ENCODE measurements at regions of chr15 and their contacts with region 1.

Region 1: DNA sequence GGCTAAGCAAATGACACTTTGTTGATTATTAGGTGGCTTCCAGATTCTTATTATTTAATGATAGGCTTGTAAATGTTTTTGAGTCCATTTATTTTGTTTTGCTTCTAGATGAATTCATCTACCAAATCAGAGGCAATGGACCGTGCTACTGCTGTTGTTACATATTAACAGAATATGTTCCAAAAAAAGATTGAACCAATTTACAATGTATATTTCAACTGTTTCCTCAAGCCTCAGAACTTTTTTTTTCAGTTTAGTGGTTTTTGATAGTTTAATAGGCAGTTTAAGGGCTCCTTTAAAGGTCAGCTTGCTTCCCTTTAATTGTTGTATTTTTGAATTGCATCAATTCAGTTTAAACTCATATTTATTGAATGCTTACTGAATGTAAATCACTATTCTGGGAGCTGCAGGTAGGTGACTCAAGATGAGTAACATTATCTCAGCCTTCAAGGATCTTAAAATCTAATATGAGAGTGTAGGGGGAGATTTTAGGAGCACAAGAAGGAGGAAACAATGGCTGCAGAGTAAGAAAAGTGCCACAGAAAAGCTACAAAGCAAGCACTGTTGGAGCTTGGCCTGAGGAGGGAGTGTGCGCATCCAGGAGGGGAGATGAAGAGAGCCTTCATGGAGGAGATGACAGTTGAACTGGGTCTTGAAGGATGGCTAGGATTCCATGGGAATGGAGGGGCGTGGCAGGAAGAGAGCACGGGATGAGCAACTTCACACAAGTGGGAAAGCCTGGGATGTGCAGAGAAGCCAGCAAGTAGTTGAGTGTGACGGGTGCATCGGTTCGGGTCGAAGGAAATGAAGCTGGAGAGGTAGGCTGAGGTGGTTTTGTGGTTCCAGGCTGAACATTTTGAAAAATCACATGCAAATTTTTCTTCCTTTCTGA is 14.7 kb downstream of the MAP2K1 start:
- DNase-seq: no peak
- ATAC-seq: no peak
- H3K4me3 ChIP-seq: no peak overlapping the region
- H3K27ac ChIP-seq: no peak overlapping the region
- H3K4me1 ChIP-seq: peaks cover 13% of the 10 kb centered on the region
- H3K27me3 ChIP-seq: no peaks in the 10 kb centered on the region
- CTCF ChIP-seq: no peak
- POLR2A ChIP-seq: no peak
- RAD21 ChIP-seq: no peak

Region 2: DNA sequence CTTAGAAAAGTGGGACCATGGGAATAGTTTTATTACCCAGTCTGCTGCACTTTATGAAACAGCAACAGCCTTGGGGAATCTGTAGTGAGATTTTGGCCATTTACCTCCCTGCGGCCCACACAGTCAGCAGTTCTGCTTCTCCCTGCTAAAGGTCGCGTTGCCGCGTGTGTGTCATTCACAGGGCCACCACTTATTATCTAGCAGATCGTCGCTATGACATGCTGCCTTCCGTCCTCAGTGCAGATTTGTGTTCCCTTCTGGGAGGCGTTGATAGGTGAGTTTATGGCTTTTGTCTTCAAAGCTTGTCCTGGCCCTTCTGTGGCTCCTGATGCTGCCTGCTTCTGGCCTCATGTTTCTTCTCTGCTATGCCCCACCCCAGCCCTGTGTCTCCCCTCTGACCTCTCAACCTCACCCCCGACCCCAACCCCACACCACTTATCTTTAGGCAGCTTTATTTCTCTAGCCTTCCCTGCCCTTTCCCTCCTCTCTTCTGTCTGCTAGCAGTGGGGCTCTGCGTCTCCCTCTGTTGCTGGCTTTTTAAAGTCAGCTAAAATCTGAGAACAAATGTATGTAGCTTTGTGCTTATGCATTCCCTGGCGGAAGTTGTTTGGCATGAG is 78.0 kb before region 1 on chr15:
- CTCF ChIA-PET with region 1: no interaction called
- POLR2A ChIA-PET with region 1: no interaction called
- dilution Hi-C with region 1: loop called (anchors 25 kb)
- in situ Hi-C with region 1: no loop called
- intact Hi-C with region 1: no loop called
- DNase-seq: no peak
- ATAC-seq: no peak
- H3K4me3 ChIP-seq: no peak overlapping the region
- H3K27ac ChIP-seq: no peak overlapping the region
- H3K4me1 ChIP-seq: no peaks in the 10 kb centered on the region
- H3K27me3 ChIP-seq: no peaks in the 10 kb centered on the region
- CTCF ChIP-seq: no peak
- POLR2A ChIP-seq: no peak
- RAD21 ChIP-seq: no peak

Measured in IMR-90 (cell line).